ENCODE measurements at regions of chr17 and their contacts with region 1.

Region 1: DNA sequence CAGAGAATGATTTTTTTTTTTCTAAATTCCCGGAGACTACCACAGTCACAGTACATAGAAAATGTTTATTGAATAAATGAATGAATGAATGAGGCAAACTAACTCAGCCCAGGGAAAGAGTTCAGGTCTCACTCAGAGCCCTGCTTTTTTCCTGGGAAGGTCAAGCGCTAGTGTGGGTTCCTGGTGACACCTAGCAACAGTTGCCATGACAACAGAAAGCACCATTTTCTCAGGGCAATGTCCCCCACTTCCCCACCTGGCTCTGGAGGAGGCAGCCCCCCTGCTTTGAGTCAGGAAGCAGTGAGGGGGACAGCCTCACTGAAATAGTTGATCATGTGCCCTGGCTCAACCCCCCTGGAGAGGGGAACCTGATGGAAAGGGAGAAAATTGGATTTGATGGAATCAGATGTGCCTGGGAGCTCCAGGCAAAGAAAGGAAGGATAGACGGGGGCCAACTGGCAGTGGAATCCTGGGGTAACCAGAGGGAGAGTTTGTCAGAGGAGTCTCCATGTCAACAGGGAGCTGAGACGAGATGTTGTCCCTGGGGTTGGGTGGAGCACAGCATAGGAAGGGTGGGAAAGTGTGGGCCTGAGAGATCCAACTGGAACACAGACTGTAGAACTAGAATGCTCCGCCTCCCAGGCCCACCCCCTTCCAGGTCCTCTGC is 242.2 kb upstream of the CCL2 start:
- DNase-seq: no peak
- ATAC-seq: no peak
- H3K4me3 ChIP-seq: no peak overlapping the region
- H3K4me3 Mint-ChIP-seq: no peak overlapping the region
- H3K27ac ChIP-seq: no peak overlapping the region
- H3K27ac Mint-ChIP-seq: no peak overlapping the region
- H3K4me1 ChIP-seq: no peaks in the 10 kb centered on the region
- H3K4me1 Mint-ChIP-seq: no peaks in the 10 kb centered on the region
- H3K27me3 ChIP-seq: no peaks in the 10 kb centered on the region
- H3K27me3 Mint-ChIP-seq: peaks cover 0 to 24% (median 0%) of the 10 kb centered on the region in 5 donors

Region 2: GRCh38 chr17:33949100-33949499 is 63.7 kb before region 1 on chr17:
- CTCF ChIA-PET with region 1: no interaction called
- POLR2A ChIA-PET with region 1: no interaction called
- intact Hi-C with region 1: loop called in 1 of 2 experiments (anchors 2 kb)
- DNase-seq: no peak
- ATAC-seq: no peak
- H3K4me3 ChIP-seq: no peak overlapping the region
- H3K4me3 Mint-ChIP-seq: no peak overlapping the region
- H3K27ac ChIP-seq: no peak overlapping the region
- H3K27ac Mint-ChIP-seq: no peak overlapping the region
- H3K4me1 ChIP-seq: no peaks in the 10 kb centered on the region
- H3K4me1 Mint-ChIP-seq: peaks cover 0 to 5% (median 0%) of the 10 kb centered on the region in 7 donors
- H3K27me3 ChIP-seq: no peaks in the 10 kb centered on the region
- H3K27me3 Mint-ChIP-seq: peaks cover 0 to 16% (median 9%) of the 10 kb centered on the region in 5 donors